ENCODE measurements at regions of chr5 and their contacts with region 1.

Region 1: GRCh38 chr5:180784497-180785097 is 18.0 kb downstream of the MGAT1 start:
- DNase-seq: peak; percentile 78 to 81
- H3K4me3 ChIP-seq: no peak overlapping the region
- H3K4me3 Mint-ChIP-seq: no peak overlapping the region
- H3K27ac Mint-ChIP-seq: no peak overlapping the region
- H3K4me1 ChIP-seq: peaks cover 24% of the 10 kb centered on the region
- H3K4me1 Mint-ChIP-seq: peaks cover 20% of the 10 kb centered on the region
- H3K27me3 ChIP-seq: no peaks in the 10 kb centered on the region
- H3K27me3 Mint-ChIP-seq: no peaks in the 10 kb centered on the region
- CTCF ChIP-seq: peak; percentile 68 to 92

Region 2: DNA sequence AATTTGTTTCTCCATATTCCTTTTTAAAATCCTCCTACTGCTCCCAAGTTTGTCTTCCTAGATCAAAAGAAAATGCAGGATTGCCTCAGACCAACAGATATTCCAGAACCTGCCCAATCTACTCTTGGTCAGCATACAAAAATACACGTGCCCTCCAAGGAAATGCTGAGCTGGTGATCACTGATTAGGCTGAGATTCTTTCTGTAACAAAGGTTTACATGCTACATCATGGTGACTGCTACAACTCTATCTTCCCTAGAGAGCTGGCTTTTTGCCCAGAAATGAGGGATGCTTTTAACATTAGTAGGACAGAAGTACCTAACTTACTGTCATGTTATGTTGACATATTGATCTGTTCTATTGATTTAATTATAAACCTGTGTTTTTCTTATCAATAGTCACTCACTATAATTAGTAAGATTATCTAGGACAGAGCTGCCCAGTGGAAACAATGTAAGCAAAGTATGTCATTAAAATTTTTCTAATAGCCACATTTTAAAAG is 80.2 kb before region 1 on chr5:
- CTCF ChIA-PET with region 1: no interaction called
- POLR2A ChIA-PET with region 1: no interaction called
- intact Hi-C with region 1: no loop called
- DNase-seq: no peak
- H3K4me3 ChIP-seq: no peak overlapping the region
- H3K4me3 Mint-ChIP-seq: no peak overlapping the region
- H3K27ac Mint-ChIP-seq: no peak overlapping the region
- H3K4me1 ChIP-seq: no peaks in the 10 kb centered on the region
- H3K4me1 Mint-ChIP-seq: no peaks in the 10 kb centered on the region
- H3K27me3 ChIP-seq: no peaks in the 10 kb centered on the region
- H3K27me3 Mint-ChIP-seq: peaks cover 18% of the 10 kb centered on the region
- CTCF ChIP-seq: no peak

Region 3: GRCh38 chr5:180810210-180810958 is 25.8 kb after region 1 on chr5:
- CTCF ChIA-PET with region 1: interaction called, 5 read pairs
- POLR2A ChIA-PET with region 1: interaction called, 13 read pairs
- intact Hi-C with region 1: loop called (anchors 1 kb)
- DNase-seq: peak; percentile 96 to 97
- H3K4me3 ChIP-seq: peak overlapping the region; percentile 64
- H3K4me3 Mint-ChIP-seq: peak overlapping the region; percentile 84
- H3K27ac Mint-ChIP-seq: peak overlapping the region; percentile 66
- H3K4me1 ChIP-seq: peaks cover 42% of the 10 kb centered on the region
- H3K4me1 Mint-ChIP-seq: peaks cover 62% of the 10 kb centered on the region
- H3K27me3 ChIP-seq: no peaks in the 10 kb centered on the region
- H3K27me3 Mint-ChIP-seq: no peaks in the 10 kb centered on the region
- CTCF ChIP-seq: no peak

Region 4: DNA sequence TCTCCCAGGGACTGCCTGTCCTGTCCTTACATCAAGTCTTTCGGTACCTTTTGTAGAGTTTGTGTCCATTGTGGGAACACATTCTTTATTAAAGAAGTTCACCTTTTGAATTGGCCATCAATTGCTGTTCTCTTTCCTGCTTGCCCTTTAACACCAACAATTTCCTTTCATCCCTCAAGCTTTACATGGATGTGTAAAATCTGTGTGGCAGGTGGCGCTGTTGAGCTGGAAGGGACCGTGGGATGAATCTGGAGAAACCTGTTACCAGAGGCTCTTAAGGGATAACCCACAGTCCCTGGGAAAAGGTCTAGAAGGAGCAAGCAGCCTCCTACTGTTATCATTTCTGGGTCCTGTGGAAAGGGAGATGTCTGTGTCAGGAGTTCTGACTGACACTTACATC is 84.4 kb after region 1 on chr5:
- CTCF ChIA-PET with region 1: interaction called, 3 read pairs
- POLR2A ChIA-PET with region 1: no interaction called
- intact Hi-C with region 1: loop called (anchors 2 kb)
- DNase-seq: peak; percentile 90
- H3K4me3 ChIP-seq: no peak overlapping the region
- H3K4me3 Mint-ChIP-seq: no peak overlapping the region
- H3K27ac Mint-ChIP-seq: no peak overlapping the region
- H3K4me1 ChIP-seq: peaks cover 6% of the 10 kb centered on the region; the same call in 1 of the 2 replicates
- H3K4me1 Mint-ChIP-seq: peaks cover 19% of the 10 kb centered on the region
- H3K27me3 ChIP-seq: no peaks in the 10 kb centered on the region
- H3K27me3 Mint-ChIP-seq: no peaks in the 10 kb centered on the region
- CTCF ChIP-seq: peak; percentile 90 to 96

Region 5: GRCh38 chr5:181159286-181159829 is 374.8 kb after region 1 on chr5:
- CTCF ChIA-PET with region 1: no interaction called
- POLR2A ChIA-PET with region 1: no interaction called
- intact Hi-C with region 1: loop called (anchors 10 kb)
- DNase-seq: peak; percentile 89 to 93
- H3K4me3 ChIP-seq: no peak overlapping the region
- H3K4me3 Mint-ChIP-seq: peak overlapping the region; percentile 22
- H3K27ac Mint-ChIP-seq: peak overlapping the region; percentile 70
- H3K4me1 ChIP-seq: peaks cover 11% of the 10 kb centered on the region
- H3K4me1 Mint-ChIP-seq: peaks cover 7% of the 10 kb centered on the region
- H3K27me3 ChIP-seq: no peaks in the 10 kb centered on the region
- H3K27me3 Mint-ChIP-seq: peaks cover 3% of the 10 kb centered on the region
- CTCF ChIP-seq: peak; percentile 92 to 93